ENCODE measurements at regions of chr6 and their contacts with region 1.

Region 1: DNA sequence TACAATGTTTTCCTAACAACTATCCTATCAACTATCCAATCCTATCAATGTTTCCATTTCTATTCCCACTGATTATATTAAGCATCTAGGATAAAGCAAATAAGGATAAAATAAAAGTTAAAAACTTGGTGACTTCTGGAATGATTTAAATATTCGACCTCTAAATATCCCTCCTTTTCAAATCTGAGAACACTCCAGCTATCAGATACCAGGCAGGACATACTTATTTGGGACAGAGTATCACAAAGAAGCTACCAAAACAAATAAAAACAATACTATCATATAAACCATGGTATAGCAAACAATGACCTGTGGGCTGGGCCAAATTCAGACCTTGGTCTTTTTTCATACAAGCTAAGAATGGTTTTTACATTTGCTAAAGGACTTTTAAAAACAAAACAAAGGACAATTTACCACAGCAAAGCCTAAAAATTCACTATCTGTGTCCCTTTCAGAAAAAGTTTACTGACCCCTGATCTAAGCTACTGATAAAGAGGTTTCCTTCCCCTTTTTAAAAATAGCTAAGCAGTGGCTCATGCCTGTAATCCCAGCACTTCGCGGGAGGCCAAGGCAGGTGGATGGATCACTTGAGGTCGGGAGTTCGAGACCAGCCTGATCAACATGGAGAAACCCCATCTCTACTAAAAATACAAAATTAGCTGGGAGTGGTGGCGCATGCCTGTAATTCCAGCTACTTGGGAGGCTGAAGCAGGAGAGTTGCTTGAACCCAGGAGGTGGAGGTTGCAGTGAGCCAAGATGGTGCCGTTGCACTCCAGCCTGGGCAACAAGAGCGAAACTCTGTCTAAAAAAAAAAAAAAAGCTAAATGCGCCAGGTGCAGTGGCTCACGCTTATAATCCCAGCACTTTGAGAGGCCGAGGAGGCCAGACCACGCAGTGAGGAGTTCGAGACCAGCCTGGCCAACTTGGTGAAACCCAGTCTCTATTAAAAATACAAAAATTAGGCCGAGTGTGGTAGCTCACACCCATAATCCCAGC is 6.0 kb downstream of the NUP153 start:
- DNase-seq: no peak
- H3K4me3 Mint-ChIP-seq: no peak overlapping the region
- H3K27ac Mint-ChIP-seq: peak overlapping the region; percentile 59
- H3K4me1 Mint-ChIP-seq: peaks cover 42% of the 10 kb centered on the region
- H3K27me3 Mint-ChIP-seq: no peaks in the 10 kb centered on the region

Region 2: DNA sequence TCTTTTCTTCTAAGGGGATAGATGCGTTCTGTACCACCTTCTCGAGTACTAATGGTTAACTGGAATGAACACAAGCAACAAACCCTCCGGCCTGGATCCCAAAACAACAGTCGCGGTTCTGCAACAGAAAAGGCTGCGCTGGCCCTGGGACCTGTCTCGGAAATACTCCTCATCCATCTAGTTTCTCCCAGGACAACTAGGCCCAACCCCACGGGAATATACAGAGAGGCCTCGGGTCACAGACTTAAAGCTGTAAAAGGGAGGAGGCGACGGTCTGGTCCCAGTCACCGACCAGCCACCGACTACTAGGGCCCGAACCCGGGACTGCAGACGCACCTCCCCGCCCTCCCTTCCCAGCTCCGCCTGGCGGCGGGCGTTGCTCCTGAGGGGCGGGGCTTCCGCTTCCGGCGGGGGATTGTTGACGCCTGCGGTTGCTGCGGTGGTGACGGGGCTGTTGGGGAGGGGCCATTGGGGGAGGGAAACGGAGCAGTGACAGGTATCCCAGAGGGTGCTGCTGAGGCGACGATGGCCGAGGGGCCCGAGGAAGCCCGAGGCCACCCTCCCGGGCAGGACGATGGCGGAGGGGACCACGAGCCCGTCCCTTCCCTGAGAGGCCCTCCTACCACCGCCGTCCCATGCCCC is 100.7 kb before region 1 on chr6 and contains the start of gene FAM8A1:
- CTCF ChIA-PET with region 1: interaction called, 21 read pairs
- POLR2A ChIA-PET with region 1: interaction called, 73 read pairs
- DNase-seq: peak; percentile 97
- H3K4me3 Mint-ChIP-seq: peak within 1 kb of the TSS; percentile 83
- H3K27ac Mint-ChIP-seq: peak within 1 kb of the TSS; percentile 73
- H3K4me1 Mint-ChIP-seq: peaks cover 35% of the 10 kb centered on the region
- H3K27me3 Mint-ChIP-seq: peaks cover 2% of the 10 kb centered on the region
- total RNA-seq, gene FAM8A1: 14.1 to 14.3 TPM

Region 3: DNA sequence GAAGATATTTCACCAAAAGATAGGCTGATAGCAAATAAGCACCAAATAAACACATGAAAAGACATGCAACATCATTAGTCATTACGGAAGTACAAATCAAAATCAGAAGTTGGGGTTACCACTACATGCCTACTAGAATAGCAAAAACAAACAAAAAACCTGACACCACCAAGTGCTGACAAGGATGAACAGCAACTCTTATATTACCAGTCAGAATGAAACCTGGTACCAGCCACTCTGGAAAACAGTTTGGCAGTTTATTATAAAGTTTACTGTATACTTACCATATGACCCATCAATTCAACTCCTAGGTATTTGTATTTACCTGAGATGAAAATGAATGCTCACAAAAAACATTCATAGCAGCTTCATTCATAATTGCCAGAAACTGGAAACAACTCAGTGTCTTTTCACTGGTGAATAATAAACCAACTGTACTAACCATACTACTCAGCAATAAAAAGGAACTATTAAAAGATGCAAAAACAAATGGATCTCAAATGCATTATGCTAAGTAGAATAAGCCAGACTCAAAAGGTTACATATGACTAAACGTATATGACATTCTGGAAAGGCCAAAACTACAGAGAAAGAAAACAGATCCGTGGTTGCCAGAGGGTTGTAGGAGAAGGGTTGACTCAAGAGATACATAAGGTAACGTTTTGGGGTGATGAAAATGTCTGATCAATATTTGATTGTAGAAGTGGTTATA is 27.0 kb before region 1 on chr6:
- CTCF ChIA-PET with region 1: interaction called, 23 read pairs
- POLR2A ChIA-PET with region 1: interaction called, 3 read pairs
- DNase-seq: no peak
- H3K4me3 Mint-ChIP-seq: no peak overlapping the region
- H3K27ac Mint-ChIP-seq: peak overlapping the region; percentile 56
- H3K4me1 Mint-ChIP-seq: peaks cover 42% of the 10 kb centered on the region
- H3K27me3 Mint-ChIP-seq: no peaks in the 10 kb centered on the region

Region 4: DNA sequence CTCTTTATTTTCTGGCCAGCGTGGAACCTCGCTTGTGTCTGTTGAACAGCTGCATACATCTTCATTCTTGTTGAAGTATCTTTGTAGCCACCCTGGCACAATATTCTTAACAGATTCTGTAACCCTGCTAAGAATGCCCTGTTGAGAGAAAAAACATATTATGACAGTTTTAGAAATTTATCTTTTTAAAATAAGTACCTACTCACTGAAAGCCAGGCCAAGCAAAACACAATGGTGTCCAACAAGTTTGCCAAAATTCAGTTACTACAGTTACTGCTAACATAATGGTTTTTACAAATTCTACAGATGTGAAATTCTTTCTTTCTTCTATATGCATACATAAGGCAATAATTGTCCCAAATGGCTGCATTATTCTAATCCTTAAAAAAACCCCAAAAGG is 12.2 kb before region 1 on chr6:
- CTCF ChIA-PET with region 1: interaction called, 27 read pairs
- POLR2A ChIA-PET with region 1: interaction called, 43 read pairs
- DNase-seq: no peak
- H3K4me3 Mint-ChIP-seq: no peak overlapping the region
- H3K27ac Mint-ChIP-seq: no peak overlapping the region
- H3K4me1 Mint-ChIP-seq: peaks cover 35% of the 10 kb centered on the region
- H3K27me3 Mint-ChIP-seq: no peaks in the 10 kb centered on the region

Region 5: GRCh38 chr6:17714879-17715851 is 14.4 kb after region 1 on chr6:
- CTCF ChIA-PET with region 1: interaction called, 33 read pairs
- POLR2A ChIA-PET with region 1: interaction called, 34 read pairs
- DNase-seq: peak; percentile 56
- H3K4me3 Mint-ChIP-seq: peak overlapping the region; percentile 67
- H3K27ac Mint-ChIP-seq: peak overlapping the region; percentile 88
- H3K4me1 Mint-ChIP-seq: peaks cover 23% of the 10 kb centered on the region
- H3K27me3 Mint-ChIP-seq: peaks cover 3% of the 10 kb centered on the region

Region 6: GRCh38 chr6:17803409-17803808 is 102.7 kb after region 1 on chr6:
- CTCF ChIA-PET with region 1: interaction called, 38 read pairs
- POLR2A ChIA-PET with region 1: no interaction called
- DNase-seq: no peak
- H3K4me3 Mint-ChIP-seq: no peak overlapping the region
- H3K27ac Mint-ChIP-seq: no peak overlapping the region
- H3K4me1 Mint-ChIP-seq: peaks cover 3% of the 10 kb centered on the region
- H3K27me3 Mint-ChIP-seq: peaks cover 15% of the 10 kb centered on the region

Region 7: GRCh38 chr6:18343741-18344140 is 643.0 kb after region 1 on chr6:
- CTCF ChIA-PET with region 1: no interaction called
- POLR2A ChIA-PET with region 1: no interaction called
- DNase-seq: no peak
- H3K4me3 Mint-ChIP-seq: no peak overlapping the region
- H3K27ac Mint-ChIP-seq: no peak overlapping the region
- H3K4me1 Mint-ChIP-seq: peaks cover 9% of the 10 kb centered on the region
- H3K27me3 Mint-ChIP-seq: no peaks in the 10 kb centered on the region